H1 (cell line): ENCODE measurements at regions of chr7 and their contacts with region 1.

Region 1: DNA sequence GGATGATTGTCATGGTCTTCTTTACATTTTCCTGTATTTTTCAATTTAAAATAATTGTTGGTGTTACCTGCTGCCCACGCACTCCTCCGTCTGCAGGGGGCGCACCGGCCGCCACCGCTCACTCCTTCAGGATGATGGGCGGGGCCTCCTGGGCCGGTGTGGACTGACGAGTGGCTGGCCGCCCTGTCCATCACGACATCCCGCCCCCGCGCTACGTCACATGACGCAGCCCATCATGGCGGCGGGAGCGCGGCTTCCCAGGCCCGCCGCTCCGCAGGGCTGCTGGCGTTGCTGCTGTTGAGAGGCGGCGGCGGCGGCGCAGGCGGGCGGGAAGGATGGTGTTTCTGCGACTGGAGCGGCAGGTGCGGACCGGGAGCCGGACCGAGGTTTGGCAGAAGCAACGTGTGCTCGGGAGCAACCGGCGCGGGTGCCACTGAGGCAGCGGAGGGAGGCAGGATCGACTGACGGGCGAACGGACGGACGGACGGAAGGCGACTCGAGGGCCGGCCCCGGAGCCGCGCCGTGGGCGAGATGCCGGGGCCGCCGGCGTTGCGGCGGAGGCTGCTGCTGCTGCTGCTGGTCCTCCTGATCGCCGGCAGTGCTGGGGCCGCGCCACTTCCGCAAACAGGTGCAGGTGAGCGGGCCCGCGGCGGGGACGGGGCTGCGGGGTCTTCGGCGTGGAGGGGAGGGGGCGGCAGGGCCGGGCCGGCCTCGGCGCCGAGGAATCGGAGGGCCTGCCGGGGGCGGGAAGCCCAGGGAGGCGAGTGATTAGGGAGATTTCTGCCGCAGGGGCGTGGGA is at the start of gene LMTK2:
- DNase-seq: peak; percentile 76 to 100
- H3K4me3 ChIP-seq: peak within 1 kb of the TSS; percentile 86 to 88 (median 86)
- H3K27ac ChIP-seq: peak within 1 kb of the TSS; percentile 75; the same call in 1 of the 2 replicates
- H3K4me1 ChIP-seq: peaks cover 2 to 11% (median 6%) of the 10 kb centered on the region in 4 experiments; a peak in 5 of 7 replicates
- H3K27me3 ChIP-seq: no peaks in the 10 kb centered on the region
- CTCF ChIP-seq: peak; percentile 71 to 89 (median 85)
- EP300 ChIP-seq: peak in 1 of 2 experiments; percentile 18; a peak in 1 of 3 replicates
- POLR2A ChIP-seq: peak; percentile 80 to 81
- RAD21 ChIP-seq: peak; percentile 58 to 61
- total RNA-seq, gene LMTK2: 26.8 and 30.7 TPM in 2 replicates

Region 2: DNA sequence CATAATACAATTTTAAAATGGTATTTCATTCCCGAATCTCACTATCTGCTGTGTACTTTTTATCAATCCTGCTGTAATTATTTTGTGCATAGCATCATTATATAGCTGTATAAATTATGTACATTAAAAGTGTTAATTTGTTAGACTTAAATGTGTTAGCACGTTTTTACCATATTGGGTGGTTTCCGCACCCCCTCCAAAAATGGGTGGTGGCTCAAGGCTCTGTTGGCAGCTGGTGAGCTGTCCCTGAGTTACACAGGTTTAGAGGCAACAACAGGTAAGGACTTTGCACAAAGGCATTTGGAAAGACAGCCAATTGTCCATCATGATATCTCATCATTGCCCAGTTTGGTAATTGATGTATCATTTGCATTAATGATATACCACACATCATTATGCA is 18.7 kb before region 1 on chr7:
- CTCF ChIA-PET with region 1: interaction called, 11 read pairs
- POLR2A ChIA-PET with region 1: no interaction called
- DNase-seq: no peak
- H3K4me3 ChIP-seq: no peak overlapping the region
- H3K27ac ChIP-seq: no peak overlapping the region
- H3K4me1 ChIP-seq: peaks cover 0 to 2% (median under 1%) of the 10 kb centered on the region in 4 experiments; a peak in 3 of 7 replicates
- H3K27me3 ChIP-seq: no peaks in the 10 kb centered on the region
- CTCF ChIP-seq: no peak
- EP300 ChIP-seq: no peak
- POLR2A ChIP-seq: no peak
- RAD21 ChIP-seq: no peak

Region 3: DNA sequence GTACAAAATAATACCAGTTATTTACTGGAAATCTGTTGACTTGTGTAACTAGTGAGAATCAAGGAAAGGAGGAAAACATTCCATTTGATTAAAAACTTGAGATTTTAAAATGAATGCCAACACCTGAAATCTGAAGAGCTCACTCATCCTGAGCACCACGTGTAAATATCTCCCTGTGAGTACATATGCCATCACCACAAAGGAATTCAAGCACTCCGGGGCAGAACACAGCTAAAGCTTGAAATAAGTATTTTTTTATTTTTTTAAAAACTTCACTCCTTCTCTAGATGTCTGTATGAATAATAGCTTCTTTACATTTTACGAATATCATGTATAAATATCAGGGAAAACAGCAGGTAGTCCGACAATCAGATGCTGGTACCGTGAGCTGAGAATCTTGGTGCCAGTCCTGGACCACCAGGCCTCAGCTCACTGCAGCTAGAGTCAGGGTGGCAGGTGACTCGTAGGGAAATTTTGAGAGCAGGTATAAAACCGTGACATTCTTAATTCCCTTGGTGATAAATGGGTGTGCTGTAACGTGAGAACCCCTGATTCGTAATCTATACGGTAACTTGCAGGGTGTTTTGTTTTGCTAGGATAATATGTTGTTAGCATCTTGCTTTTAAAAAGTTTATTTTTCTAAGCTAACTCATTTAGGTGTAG is 12.5 kb after region 1 on chr7:
- CTCF ChIA-PET with region 1: interaction called, 10 read pairs
- POLR2A ChIA-PET with region 1: interaction called, 8 read pairs
- DNase-seq: no peak
- H3K4me3 ChIP-seq: no peak overlapping the region
- H3K27ac ChIP-seq: no peak overlapping the region
- H3K4me1 ChIP-seq: peaks cover 0 to 4% (median 3%) of the 10 kb centered on the region in 4 experiments; a peak in 3 of 7 replicates
- H3K27me3 ChIP-seq: no peaks in the 10 kb centered on the region
- CTCF ChIP-seq: no peak
- EP300 ChIP-seq: no peak
- POLR2A ChIP-seq: no peak
- RAD21 ChIP-seq: no peak

Region 4: DNA sequence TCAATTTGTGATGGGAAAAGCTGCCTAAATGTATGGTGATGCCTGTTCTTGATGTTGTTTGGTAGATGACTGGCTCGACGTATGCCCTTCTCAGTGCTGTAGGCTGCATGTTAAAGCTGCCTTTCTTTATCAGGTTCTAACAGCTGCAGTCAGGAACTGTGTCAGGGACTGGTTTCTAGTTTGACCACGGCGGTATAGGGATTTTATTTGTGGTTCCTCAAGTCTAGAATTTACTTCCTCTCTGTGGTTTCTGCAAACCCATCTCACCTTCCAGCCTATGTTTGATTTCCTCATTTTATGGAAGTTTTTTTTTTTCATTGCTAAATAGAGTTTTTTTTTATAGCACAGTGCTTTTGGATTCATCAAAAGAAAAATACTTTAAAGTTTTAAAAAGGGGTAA is 26.3 kb after region 1 on chr7:
- CTCF ChIA-PET with region 1: interaction called, 12 read pairs
- POLR2A ChIA-PET with region 1: interaction called, 3 read pairs
- DNase-seq: no peak
- H3K4me3 ChIP-seq: no peak overlapping the region
- H3K27ac ChIP-seq: no peak overlapping the region
- H3K4me1 ChIP-seq: peaks cover 2 to 14% (median 8%) of the 10 kb centered on the region in 4 experiments
- H3K27me3 ChIP-seq: no peaks in the 10 kb centered on the region
- CTCF ChIP-seq: no peak
- EP300 ChIP-seq: no peak
- POLR2A ChIP-seq: no peak
- RAD21 ChIP-seq: no peak